Naive thymus-derived CD4-positive, alpha-beta T cell (primary cell): ENCODE measurements at regions of chr2 and their contacts with region 1.

Region 1: DNA sequence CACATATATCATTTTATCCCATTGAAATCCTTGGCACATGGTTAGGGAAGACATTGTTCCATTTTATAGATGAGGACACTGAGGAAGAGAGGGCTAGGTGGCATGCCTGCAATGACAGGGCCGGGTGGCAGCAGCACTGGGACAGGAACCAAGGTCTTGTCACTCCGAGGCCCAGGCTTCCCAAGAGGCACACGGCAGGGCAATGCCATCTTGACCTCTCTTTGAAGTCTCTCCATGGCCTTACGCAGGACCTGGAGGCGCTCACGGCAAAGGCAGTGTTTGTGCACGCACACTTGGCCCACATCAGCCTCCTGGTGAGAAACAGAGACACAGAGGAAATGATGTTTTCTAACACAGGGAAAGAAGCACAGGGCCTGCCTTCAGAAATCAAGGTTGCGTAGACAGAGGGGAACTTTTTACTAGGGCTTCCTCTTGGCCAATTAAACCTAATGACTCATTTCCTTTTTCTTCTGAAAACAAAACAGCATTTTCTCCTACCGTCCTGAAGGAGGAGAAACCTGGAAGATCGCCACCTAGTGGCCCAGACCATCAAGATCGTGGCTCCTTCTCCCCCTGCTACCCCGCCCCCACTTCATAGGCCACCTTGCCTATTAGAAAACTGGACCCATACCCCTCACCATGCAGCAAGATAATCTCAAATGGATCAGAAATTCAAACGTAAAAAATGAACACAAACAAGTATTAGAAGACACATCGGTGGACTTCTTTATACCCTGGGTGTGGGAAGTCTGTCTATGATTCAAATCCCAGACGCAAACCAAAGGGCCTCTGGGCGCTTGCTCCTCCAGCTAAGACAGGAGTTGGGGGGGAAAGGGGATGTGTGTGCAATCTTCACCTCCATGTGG is 74.6 kb upstream of the SP3 start:
- DNase-seq: peak; percentile 55 to 86 (median 77)
- ATAC-seq: peak; percentile 91
- H3K4me3 ChIP-seq: peak overlapping the region; percentile 41
- H3K4me3 Mint-ChIP-seq: peak overlapping the region; percentile 32 to 81 (median 68)
- H3K27ac ChIP-seq: peak overlapping the region; percentile 82
- H3K27ac Mint-ChIP-seq: peak overlapping the region; percentile 44 to 91 (median 89)
- H3K4me1 ChIP-seq: peaks cover 0 to 5% of the 10 kb centered on the region in 2 donors
- H3K4me1 Mint-ChIP-seq: peaks cover 8 to 20% (median 11%) of the 10 kb centered on the region in 7 donors
- H3K27me3 ChIP-seq: no peaks in the 10 kb centered on the region
- H3K27me3 Mint-ChIP-seq: peaks cover 0 to 12% (median 0%) of the 10 kb centered on the region in 5 donors

Region 2: GRCh38 chr2:172821370-172822347 is 1218.1 kb before region 1 on chr2:
- CTCF ChIA-PET with region 1: no interaction called
- POLR2A ChIA-PET with region 1: no interaction called
- intact Hi-C with region 1: no loop called
- DNase-seq: no peak
- ATAC-seq: no peak
- H3K4me3 ChIP-seq: no peak overlapping the region
- H3K4me3 Mint-ChIP-seq: no peak overlapping the region
- H3K27ac ChIP-seq: no peak overlapping the region
- H3K27ac Mint-ChIP-seq: no peak overlapping the region
- H3K4me1 ChIP-seq: no peaks in the 10 kb centered on the region
- H3K4me1 Mint-ChIP-seq: no peaks in the 10 kb centered on the region
- H3K27me3 ChIP-seq: no peaks in the 10 kb centered on the region
- H3K27me3 Mint-ChIP-seq: peaks cover 0 to 20% (median 5%) of the 10 kb centered on the region in 5 donors

Region 3: DNA sequence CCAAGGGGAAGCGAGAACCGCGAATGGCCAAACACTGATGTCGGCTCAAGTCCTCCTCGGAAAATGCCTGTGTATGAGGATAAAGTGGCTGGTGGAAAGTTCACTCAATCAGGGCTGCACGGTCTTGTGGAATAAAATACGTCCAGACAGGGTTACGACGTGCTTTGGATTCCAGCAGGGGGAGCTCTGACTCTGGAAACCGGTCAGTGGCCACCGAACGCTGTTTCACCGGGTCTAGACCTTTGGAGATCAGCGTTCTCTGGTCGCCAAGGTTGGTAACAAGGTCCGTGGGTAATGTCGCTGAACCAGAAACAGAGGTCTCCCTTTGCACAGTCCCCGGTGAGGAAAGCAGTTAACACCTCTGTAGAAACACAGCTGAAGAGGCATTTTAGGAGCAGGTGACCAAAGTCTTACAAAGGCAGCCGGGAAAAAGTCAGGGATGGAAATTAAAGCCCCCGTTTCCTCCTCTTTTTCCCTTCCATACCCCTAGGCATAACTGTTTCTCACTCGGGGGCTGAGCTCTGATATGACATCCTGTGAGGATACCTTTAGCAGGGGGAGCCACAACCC is 637.3 kb before region 1 on chr2:
- CTCF ChIA-PET with region 1: no interaction called
- POLR2A ChIA-PET with region 1: interaction called, 3 read pairs
- intact Hi-C with region 1: loop called in 1 of 2 experiments (anchors 1 kb)
- DNase-seq: peak; percentile 40 to 74 (median 67)
- ATAC-seq: peak; percentile 87
- H3K4me3 ChIP-seq: no peak overlapping the region
- H3K4me3 Mint-ChIP-seq: peak overlapping the region in 1 of 10 donors; percentile 62
- H3K27ac ChIP-seq: no peak overlapping the region
- H3K27ac Mint-ChIP-seq: no peak overlapping the region
- H3K4me1 ChIP-seq: peaks cover 0 to 3% of the 10 kb centered on the region in 2 donors
- H3K4me1 Mint-ChIP-seq: peaks cover 0 to 12% (median 4%) of the 10 kb centered on the region in 7 donors
- H3K27me3 ChIP-seq: peaks cover 3 to 7% of the 10 kb centered on the region in 2 donors
- H3K27me3 Mint-ChIP-seq: peaks cover 55 to 73% (median 62%) of the 10 kb centered on the region in 5 donors

Region 4: DNA sequence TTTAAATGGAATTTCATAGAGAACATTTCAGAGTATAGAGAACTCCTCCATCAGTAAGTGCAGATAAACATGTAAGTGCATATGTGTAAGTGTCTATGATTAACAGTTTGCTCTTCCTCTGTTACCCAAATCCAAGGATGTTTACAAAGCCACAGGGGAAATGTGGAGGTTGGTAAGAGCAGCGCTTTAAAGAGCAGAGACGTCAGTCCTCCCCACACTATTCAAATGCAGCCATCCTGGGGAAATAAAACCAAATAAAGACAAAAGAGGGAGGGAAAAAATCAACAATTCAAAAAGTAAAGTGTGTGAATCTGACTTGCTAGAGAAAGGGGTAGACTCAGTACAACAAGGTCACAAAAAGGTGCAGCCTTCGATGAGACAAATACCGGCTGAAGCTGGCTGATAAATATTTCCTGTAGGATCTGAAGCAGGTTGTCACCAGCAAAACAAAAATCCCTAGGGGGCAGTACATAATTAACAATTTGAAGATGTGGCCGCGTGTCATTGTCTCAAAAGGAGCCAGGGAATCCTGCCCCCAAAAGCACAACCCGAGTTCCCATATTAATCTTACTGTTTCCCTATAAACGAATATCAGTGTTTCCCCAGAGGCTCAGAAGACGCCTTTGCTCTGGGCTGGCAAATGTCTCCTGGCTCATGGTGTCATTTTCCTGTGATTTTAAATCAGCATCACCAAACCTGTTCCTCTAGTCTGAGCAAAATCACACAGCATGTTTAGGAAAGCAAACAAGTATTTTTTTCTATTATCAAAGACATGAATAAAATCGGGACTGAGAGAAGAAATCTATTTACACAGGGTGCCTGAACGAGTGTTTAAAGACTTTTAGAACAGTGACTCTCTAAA is 468.5 kb before region 1 on chr2:
- CTCF ChIA-PET with region 1: interaction called, 3 read pairs
- POLR2A ChIA-PET with region 1: no interaction called
- intact Hi-C with region 1: loop called in 1 of 2 experiments (anchors 10 kb)
- DNase-seq: no peak
- ATAC-seq: no peak
- H3K4me3 ChIP-seq: no peak overlapping the region
- H3K4me3 Mint-ChIP-seq: no peak overlapping the region
- H3K27ac ChIP-seq: no peak overlapping the region
- H3K27ac Mint-ChIP-seq: peak overlapping the region in 1 of 9 donors; percentile 1
- H3K4me1 ChIP-seq: no peaks in the 10 kb centered on the region
- H3K4me1 Mint-ChIP-seq: peaks cover 0 to 7% (median 5%) of the 10 kb centered on the region in 7 donors
- H3K27me3 ChIP-seq: no peaks in the 10 kb centered on the region
- H3K27me3 Mint-ChIP-seq: peaks cover 10 to 26% (median 19%) of the 10 kb centered on the region in 5 donors

Region 5: DNA sequence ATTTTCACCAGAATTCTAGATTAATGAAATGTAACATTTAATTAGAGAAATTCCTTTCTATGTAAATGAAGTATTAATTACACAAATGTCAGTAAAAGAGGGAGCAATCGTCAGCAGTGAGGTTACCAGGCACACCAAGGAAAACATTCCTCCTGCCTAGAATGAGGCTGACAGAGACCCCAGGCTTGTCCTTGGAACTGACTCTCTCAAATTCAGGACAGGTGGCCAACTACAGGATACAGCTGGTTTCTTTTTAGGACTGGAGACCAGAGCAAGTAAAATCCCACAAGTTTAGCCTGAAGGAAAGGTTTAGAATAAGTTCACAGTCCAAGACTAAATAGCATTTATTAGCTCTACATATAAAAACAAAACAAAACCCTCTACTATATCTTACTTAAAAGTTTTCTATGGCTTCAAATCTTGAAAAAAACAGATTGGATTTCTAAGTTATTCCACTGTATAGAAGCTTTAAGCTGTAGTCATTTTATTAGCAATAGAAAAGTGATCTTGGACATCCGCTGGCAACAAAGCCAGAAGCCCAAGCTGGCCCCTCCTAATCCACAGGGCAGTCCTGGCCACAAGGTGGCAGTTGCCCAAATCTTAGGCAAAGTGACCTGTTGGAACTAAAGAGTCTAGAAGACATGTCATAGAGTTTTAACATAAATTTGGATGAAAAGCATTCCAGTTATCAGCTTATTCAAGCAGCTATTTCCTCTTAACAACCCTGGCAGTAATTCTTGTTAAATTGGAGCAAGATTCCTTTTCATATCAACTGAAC is 155.6 kb before region 1 on chr2:
- CTCF ChIA-PET with region 1: interaction called, 3 read pairs
- POLR2A ChIA-PET with region 1: no interaction called
- intact Hi-C with region 1: loop called in 1 of 2 experiments (anchors 1 kb)
- DNase-seq: peak in 4 of 9 donors; percentile 13 to 24 (median 18)
- ATAC-seq: peak; percentile 62
- H3K4me3 ChIP-seq: no peak overlapping the region
- H3K4me3 Mint-ChIP-seq: no peak overlapping the region
- H3K27ac ChIP-seq: no peak overlapping the region
- H3K27ac Mint-ChIP-seq: no peak overlapping the region
- H3K4me1 ChIP-seq: no peaks in the 10 kb centered on the region
- H3K4me1 Mint-ChIP-seq: peaks cover 0 to 4% (median 0%) of the 10 kb centered on the region in 7 donors
- H3K27me3 ChIP-seq: no peaks in the 10 kb centered on the region
- H3K27me3 Mint-ChIP-seq: peaks cover 15 to 32% (median 24%) of the 10 kb centered on the region in 5 donors

Region 6: GRCh38 chr2:173909846-173910245 is 129.9 kb before region 1 on chr2:
- CTCF ChIA-PET with region 1: no interaction called
- POLR2A ChIA-PET with region 1: no interaction called
- intact Hi-C with region 1: loop called in 1 of 2 experiments (anchors 5 kb)
- DNase-seq: no peak
- ATAC-seq: no peak
- H3K4me3 ChIP-seq: no peak overlapping the region
- H3K4me3 Mint-ChIP-seq: no peak overlapping the region
- H3K27ac ChIP-seq: no peak overlapping the region
- H3K27ac Mint-ChIP-seq: no peak overlapping the region
- H3K4me1 ChIP-seq: no peaks in the 10 kb centered on the region
- H3K4me1 Mint-ChIP-seq: peaks cover 5 to 17% (median 15%) of the 10 kb centered on the region in 7 donors
- H3K27me3 ChIP-seq: no peaks in the 10 kb centered on the region
- H3K27me3 Mint-ChIP-seq: no peaks in the 10 kb centered on the region

Region 7: DNA sequence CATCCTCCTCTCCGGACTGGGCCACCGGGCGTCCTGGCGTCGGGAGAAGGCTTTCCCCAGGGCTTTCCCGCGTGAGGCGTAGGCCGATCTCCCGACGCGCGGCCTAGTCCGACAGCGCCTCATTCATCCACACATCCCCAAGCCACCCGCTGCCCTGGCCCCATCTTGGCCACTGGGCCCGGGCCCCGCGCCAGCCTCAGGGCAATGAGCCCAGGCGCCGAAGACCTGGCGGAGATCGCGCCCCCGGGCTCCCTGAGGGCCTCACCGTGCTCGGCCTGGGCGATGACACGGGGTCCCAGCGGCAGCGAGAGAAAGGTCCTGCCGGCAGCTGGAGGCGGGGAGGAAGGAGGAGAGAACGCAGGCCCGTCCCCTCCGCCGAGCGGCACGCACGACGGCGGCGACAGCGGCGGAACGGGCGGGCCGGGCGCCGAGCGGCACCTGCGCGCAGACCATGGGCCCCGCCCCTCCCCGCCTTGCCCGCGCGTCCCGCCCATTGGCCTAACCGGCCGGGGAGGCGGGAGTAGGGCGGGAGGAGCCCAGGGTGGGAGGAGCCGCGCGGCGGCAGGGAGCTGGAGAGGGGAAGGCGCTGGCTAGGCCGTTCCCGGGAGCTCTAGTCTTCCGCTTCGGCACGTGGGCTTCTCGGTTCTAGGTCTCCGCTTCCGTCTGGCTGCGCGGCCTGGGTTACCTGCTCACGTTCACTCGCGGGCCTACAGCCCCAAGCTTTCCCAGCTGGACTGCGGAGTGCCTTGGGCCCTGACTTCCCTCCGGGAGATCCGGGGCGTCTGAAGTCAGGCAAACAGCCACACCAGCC is 208.6 kb after region 1 on chr2 and contains the start of gene OLA1:
- CTCF ChIA-PET with region 1: no interaction called
- POLR2A ChIA-PET with region 1: no interaction called
- intact Hi-C with region 1: loop called (anchors 1 to 5 kb)
- DNase-seq: peak; percentile 91 to 99 (median 95)
- ATAC-seq: peak; percentile 99
- H3K4me3 ChIP-seq: peak within 1 kb of the TSS; percentile 90
- H3K4me3 Mint-ChIP-seq: peak within 1 kb of the TSS; percentile 71 to 88 (median 86)
- H3K27ac ChIP-seq: peak within 1 kb of the TSS; percentile 82
- H3K27ac Mint-ChIP-seq: peak within 1 kb of the TSS; percentile 67 to 91 (median 79)
- H3K4me1 ChIP-seq: peaks cover 6 to 12% of the 10 kb centered on the region in 2 donors
- H3K4me1 Mint-ChIP-seq: peaks cover 18 to 32% (median 25%) of the 10 kb centered on the region in 7 donors
- H3K27me3 ChIP-seq: no peaks in the 10 kb centered on the region
- H3K27me3 Mint-ChIP-seq: peaks cover 0 to 5% (median 0%) of the 10 kb centered on the region in 5 donors
- total RNA-seq, gene OLA1: 34.4 to 84.7 (median 40.3) TPM